Activated CD4-positive, alpha-beta memory T cell treated with anti-CD3 and anti-CD28 coated beads for 36 hours (primary cell): ENCODE measurements at regions of chr12 and their contacts with region 1.

Region 1: DNA sequence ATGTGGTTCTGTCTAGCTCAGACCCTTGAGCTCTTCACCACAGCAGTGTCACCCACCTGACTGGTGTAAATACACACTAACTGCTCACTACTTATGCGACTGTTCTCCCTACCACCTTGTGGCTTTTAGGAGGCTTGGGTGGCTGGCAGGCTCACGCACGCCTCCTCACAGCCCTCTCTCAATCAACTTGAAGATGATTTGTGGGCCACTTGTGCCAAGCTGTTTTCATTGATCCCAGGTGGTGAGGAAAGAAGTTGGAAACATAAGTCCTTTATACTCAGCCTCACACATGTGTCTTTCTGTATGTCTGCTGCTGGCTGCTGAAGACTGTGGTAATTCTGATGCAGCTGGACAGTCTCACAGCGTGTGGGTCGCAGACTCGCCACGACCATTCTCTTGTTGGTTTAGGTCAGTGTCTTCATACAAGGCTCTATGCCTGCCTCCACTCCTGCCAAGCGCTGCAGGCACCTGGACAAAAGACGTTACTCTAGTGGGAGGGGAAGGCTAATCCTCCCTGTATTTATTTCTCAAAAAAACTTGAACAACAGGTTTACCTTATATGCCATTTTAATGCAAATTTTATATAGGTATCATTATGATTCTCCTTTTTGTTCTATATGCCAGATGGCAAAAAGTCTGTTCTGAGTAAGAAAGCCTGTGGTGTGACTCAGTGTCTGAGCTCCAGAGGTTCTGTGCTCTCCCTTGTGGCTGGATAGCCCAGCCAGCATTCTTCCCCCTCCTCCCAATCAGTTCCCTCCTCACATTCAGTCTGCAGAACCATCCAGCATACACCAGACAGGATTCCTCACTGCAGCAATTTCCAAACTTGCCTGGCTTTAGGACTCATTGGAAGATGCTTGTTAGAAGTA is 115.6 kb downstream of the DIP2B start:
- DNase-seq: peak; percentile 51
- H3K4me3 Mint-ChIP-seq: no peak overlapping the region
- H3K27ac Mint-ChIP-seq: peak overlapping the region; percentile 38
- H3K4me1 Mint-ChIP-seq: peaks cover 56% of the 10 kb centered on the region
- H3K27me3 Mint-ChIP-seq: no peaks in the 10 kb centered on the region

Region 2: GRCh38 chr12:50504798-50505385 is 115.5 kb before region 1 on chr12 and contains the start of gene DIP2B:
- CTCF ChIA-PET with region 1: interaction called, 18 read pairs
- POLR2A ChIA-PET with region 1: interaction called, 3 read pairs
- intact Hi-C with region 1: loop called (anchors 5 kb)
- DNase-seq: peak; percentile 96
- H3K4me3 Mint-ChIP-seq: peak within 1 kb of the TSS; percentile 99
- H3K27ac Mint-ChIP-seq: peak within 1 kb of the TSS; percentile 93
- H3K4me1 Mint-ChIP-seq: peaks cover 42% of the 10 kb centered on the region
- H3K27me3 Mint-ChIP-seq: no peaks in the 10 kb centered on the region
- total RNA-seq, gene DIP2B: 23.3 to 23.7 TPM

Region 3: GRCh38 chr12:50533203-50533584 is 87.1 kb before region 1 on chr12:
- CTCF ChIA-PET with region 1: interaction called, 3 read pairs
- POLR2A ChIA-PET with region 1: no interaction called
- intact Hi-C with region 1: loop called (anchors 5 kb)
- DNase-seq: no peak
- H3K4me3 Mint-ChIP-seq: no peak overlapping the region
- H3K27ac Mint-ChIP-seq: no peak overlapping the region
- H3K4me1 Mint-ChIP-seq: peaks cover 38% of the 10 kb centered on the region
- H3K27me3 Mint-ChIP-seq: no peaks in the 10 kb centered on the region

Region 4: GRCh38 chr12:50555471-50555885 is 64.9 kb before region 1 on chr12:
- CTCF ChIA-PET with region 1: no interaction called
- POLR2A ChIA-PET with region 1: no interaction called
- intact Hi-C with region 1: loop called (anchors 1 kb)
- DNase-seq: peak; percentile 66
- H3K4me3 Mint-ChIP-seq: peak overlapping the region; percentile 58
- H3K27ac Mint-ChIP-seq: peak overlapping the region; percentile 94
- H3K4me1 Mint-ChIP-seq: peaks cover 53% of the 10 kb centered on the region
- H3K27me3 Mint-ChIP-seq: no peaks in the 10 kb centered on the region

Region 5: DNA sequence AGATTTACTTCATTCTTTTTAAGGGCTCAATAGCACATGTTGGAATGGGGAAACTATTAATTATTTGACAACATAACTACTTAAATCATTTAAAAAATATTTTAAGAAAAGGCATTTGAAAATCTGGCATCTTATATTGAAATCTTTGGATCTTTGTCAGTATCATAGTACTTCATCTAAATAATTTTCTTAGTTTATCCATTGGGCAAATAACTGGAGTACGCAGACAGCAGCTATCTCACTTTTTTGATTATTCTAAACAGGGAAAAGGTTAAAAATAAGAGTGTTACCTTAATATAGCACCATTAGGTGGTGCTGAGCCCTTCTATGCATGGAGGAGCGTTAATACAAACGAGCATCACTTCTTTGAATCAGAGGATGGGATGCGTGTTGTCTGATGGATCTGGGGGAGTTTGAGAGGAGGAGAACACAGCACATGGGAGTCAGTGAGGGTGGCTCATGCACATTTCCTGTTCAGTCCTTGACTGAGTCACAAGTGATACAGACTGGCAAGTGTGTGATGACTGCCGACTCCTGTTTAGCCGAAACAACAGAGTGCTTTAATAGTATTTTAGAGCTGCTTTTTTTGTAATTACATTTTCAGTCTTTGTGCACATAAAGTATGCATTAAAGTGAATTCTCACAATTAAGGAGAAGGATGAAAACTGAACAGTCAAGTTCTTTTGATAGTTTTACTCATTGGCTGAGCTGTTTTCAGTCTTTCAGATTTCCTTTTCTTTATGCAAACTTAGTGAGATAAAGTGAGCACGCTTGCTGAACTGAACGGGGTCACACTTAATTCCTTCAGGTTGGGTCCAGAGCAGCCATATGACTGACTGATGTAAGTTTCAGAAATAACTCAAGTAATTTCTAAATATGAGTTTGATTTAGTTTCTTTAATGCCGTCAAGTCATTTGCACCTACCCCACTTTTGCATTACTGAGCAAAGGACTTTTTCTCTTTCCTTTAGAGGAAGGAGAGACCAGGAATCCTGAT is 22.8 kb before region 1 on chr12:
- CTCF ChIA-PET with region 1: no interaction called
- POLR2A ChIA-PET with region 1: no interaction called
- intact Hi-C with region 1: loop called (anchors 2 kb)
- DNase-seq: peak; percentile 76
- H3K4me3 Mint-ChIP-seq: peak overlapping the region; percentile 57
- H3K27ac Mint-ChIP-seq: peak overlapping the region; percentile 78
- H3K4me1 Mint-ChIP-seq: peaks cover 42% of the 10 kb centered on the region
- H3K27me3 Mint-ChIP-seq: no peaks in the 10 kb centered on the region

Region 6: GRCh38 chr12:50763639-50764285 is 143.4 kb after region 1 on chr12 and contains the start of gene ATF1:
- CTCF ChIA-PET with region 1: no interaction called
- POLR2A ChIA-PET with region 1: no interaction called
- intact Hi-C with region 1: no loop called
- DNase-seq: peak; percentile 94
- H3K4me3 Mint-ChIP-seq: peak within 1 kb of the TSS; percentile 82
- H3K27ac Mint-ChIP-seq: peak within 1 kb of the TSS; percentile 87
- H3K4me1 Mint-ChIP-seq: peaks cover 34% of the 10 kb centered on the region
- H3K27me3 Mint-ChIP-seq: no peaks in the 10 kb centered on the region
- total RNA-seq, gene ATF1: 50.1 to 50.5 TPM